ENCODE measurements at regions of chrX and their contacts with region 1.

Region 1: GRCh38 chrX:109709129-109709631 is 23.9 kb downstream of the ACSL4 start:
- DNase-seq: peak; percentile 60
- ATAC-seq: peak; percentile 82
- H3K4me3 ChIP-seq: 0 out of 2 replicates have a peak overlapping the region, but pooled peaks have one; percentile 29
- H3K27ac ChIP-seq: peak overlapping the region; percentile 71
- H3K4me1 ChIP-seq: peaks cover 9% of the 10 kb centered on the region
- H3K27me3 ChIP-seq: no peaks in the 10 kb centered on the region
- CTCF ChIP-seq: no peak; a peak in 1 of 6 replicates
- EP300 ChIP-seq: peak in 1 of 2 experiments; percentile 59; a peak in 2 of 4 replicates
- POLR2A ChIP-seq: no peak
- RAD21 ChIP-seq: no peak

Region 2: DNA sequence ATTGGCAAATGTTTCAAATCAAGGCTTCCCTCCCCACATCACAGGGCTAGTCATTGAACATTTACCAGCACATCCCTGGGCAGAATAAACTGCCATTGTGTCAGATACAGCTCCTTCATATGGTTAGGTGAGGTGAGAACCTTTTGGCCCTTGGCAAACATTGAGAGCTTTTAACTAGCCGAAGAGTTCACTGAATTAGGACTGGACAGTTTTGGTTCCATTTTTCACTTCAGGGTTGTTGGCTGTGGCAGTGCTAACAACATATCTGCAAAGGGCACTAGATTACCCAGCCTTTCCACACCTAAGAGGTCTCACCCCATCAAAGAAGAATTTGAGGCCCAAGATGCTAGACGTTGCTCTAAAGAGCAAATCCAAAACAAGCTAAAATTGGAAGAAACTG is 408.0 kb before region 1 on chrX:
- CTCF ChIA-PET with region 1: no interaction called
- POLR2A ChIA-PET with region 1: no interaction called
- RAD21 ChIA-PET with region 1: no interaction called
- SMC1A ChIA-PET with region 1: no interaction called
- in situ Hi-C with region 1: no loop called
- intact Hi-C with region 1: no loop called
- DNase-seq: no peak
- ATAC-seq: peak; percentile 31; the same call in 1 of the 3 replicates
- H3K4me3 ChIP-seq: no peak overlapping the region
- H3K27ac ChIP-seq: no peak overlapping the region
- H3K4me1 ChIP-seq: no peaks in the 10 kb centered on the region
- H3K27me3 ChIP-seq: no peaks in the 10 kb centered on the region
- CTCF ChIP-seq: no peak
- EP300 ChIP-seq: no peak
- POLR2A ChIP-seq: no peak
- RAD21 ChIP-seq: no peak

Region 3: DNA sequence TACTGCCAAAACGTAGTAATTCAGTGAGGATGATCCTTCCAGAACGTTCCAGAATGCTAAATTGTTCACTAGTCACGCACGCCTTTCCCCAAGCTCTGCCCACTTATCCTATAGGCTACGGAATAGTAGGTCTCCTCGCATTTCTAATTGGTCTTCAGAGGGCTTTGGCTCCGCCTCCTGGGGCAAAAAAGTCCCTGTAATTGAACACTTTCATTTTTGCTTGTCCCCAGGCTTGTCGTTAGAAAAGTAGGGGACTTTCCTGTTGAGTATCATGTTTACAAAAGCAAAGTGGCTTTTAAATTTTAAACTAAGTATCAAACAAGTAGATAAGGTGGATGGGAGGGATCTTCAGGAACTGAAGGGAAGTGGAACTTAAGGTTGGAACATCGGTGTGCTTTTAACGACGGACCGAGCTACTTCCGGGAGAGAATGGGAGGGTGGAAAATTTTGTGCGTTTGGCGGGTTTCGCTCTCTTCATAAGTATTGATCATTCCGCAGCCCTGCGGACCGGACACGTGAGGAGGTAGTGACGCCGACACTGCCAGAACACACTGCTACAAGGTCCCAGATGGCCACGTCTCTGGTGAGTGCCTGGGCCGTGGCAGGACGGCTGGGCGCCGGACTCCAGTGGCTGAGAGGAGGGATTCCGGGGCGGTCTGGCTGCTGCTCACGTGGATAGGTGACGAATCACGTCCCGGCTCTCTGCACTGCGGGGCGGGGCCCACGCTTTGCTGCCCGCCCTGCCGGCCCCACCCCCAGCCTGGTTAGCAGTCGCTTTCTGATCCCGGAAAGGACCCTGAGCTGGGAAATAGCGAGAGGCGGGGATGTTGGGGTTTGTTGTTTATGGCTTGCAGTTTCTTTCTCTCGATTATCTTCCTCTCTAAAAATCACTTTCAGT is 172.5 kb before region 1 on chrX and contains the start of gene NXT2:
- CTCF ChIA-PET with region 1: no interaction called
- POLR2A ChIA-PET with region 1: interaction called, 3 read pairs
- RAD21 ChIA-PET with region 1: interaction called, 4 read pairs
- SMC1A ChIA-PET with region 1: no interaction called
- in situ Hi-C with region 1: no loop called
- intact Hi-C with region 1: loop called (anchors 10 kb)
- DNase-seq: peak; percentile 73
- ATAC-seq: peak; percentile 99
- H3K4me3 ChIP-seq: peak within 1 kb of the TSS; percentile 64
- H3K27ac ChIP-seq: peak within 1 kb of the TSS; percentile 89
- H3K4me1 ChIP-seq: no peaks in the 10 kb centered on the region
- H3K27me3 ChIP-seq: no peaks in the 10 kb centered on the region
- CTCF ChIP-seq: no peak
- EP300 ChIP-seq: no peak; a peak in 1 of 4 replicates
- POLR2A ChIP-seq: peak; percentile 94
- RAD21 ChIP-seq: no peak
- polyA plus RNA-seq, gene NXT2: 17.4 to 30.0 TPM

Region 4: DNA sequence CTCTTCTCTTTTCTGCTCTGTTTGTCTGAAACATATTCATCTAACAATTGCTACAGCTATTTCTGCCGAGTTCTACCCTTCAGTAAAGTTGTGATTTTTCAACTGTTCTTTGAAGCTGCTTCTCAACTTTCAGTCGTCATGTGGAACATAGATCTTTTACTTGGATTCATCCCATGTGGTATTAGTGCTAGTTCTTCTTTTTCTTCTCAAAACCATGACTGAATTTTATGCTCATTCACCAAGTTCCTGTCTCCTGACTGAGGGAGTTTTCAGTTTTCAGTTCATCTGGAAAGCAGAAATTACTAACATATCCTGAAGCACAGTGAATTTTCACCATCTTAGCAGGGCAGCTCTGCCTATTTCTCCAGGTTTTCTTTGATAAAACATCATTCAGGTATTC is 11.8 kb after region 1 on chrX:
- CTCF ChIA-PET with region 1: interaction called, 21 read pairs
- POLR2A ChIA-PET with region 1: interaction called, 5 read pairs
- RAD21 ChIA-PET with region 1: interaction called, 19 read pairs
- SMC1A ChIA-PET with region 1: interaction called, 13 read pairs
- in situ Hi-C with region 1: no loop called
- intact Hi-C with region 1: no loop called
- DNase-seq: no peak
- ATAC-seq: peak; percentile 31
- H3K4me3 ChIP-seq: no peak overlapping the region
- H3K27ac ChIP-seq: no peak overlapping the region; the same call in 1 of the 2 replicates
- H3K4me1 ChIP-seq: peaks cover 10% of the 10 kb centered on the region
- H3K27me3 ChIP-seq: no peaks in the 10 kb centered on the region
- CTCF ChIP-seq: no peak
- EP300 ChIP-seq: no peak
- POLR2A ChIP-seq: no peak
- RAD21 ChIP-seq: no peak

Region 5: GRCh38 chrX:109830704-109831206 is 121.6 kb after region 1 on chrX:
- CTCF ChIA-PET with region 1: interaction called, 3 read pairs
- POLR2A ChIA-PET with region 1: no interaction called
- RAD21 ChIA-PET with region 1: interaction called, 20 read pairs
- SMC1A ChIA-PET with region 1: interaction called, 12 read pairs
- in situ Hi-C with region 1: no loop called
- intact Hi-C with region 1: no loop called
- DNase-seq: no peak
- ATAC-seq: peak; percentile 80
- H3K4me3 ChIP-seq: no peak overlapping the region
- H3K27ac ChIP-seq: no peak overlapping the region
- H3K4me1 ChIP-seq: no peaks in the 10 kb centered on the region
- H3K27me3 ChIP-seq: no peaks in the 10 kb centered on the region
- CTCF ChIP-seq: no peak
- EP300 ChIP-seq: no peak
- POLR2A ChIP-seq: no peak
- RAD21 ChIP-seq: no peak

Region 6: DNA sequence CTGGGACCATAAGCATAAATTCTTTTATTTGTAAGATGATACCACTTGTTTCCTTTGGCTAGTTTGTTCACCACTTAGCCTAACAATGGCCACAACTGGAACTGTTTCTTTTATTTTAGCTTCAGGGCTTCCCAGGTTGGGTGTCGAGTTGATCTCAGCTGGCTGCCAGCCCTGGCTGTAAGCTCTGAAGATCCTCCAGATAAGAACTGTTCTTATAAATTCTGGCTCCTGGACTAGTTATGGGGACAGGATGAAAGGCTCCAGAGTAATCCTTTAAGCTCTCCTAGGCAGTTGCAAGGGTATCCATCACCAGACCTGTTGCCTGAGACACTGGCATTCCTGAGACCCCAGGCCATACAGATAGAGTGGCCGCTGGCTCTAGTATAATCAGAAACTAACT is 153.3 kb after region 1 on chrX:
- CTCF ChIA-PET with region 1: interaction called, 337 read pairs
- POLR2A ChIA-PET with region 1: interaction called, 4 read pairs
- RAD21 ChIA-PET with region 1: interaction called, 257 read pairs
- SMC1A ChIA-PET with region 1: interaction called, 403 read pairs
- in situ Hi-C with region 1: no loop called
- intact Hi-C with region 1: loop called (anchors 1 kb)
- DNase-seq: no peak
- ATAC-seq: no peak
- H3K4me3 ChIP-seq: no peak overlapping the region
- H3K27ac ChIP-seq: no peak overlapping the region
- H3K4me1 ChIP-seq: no peaks in the 10 kb centered on the region
- H3K27me3 ChIP-seq: no peaks in the 10 kb centered on the region
- CTCF ChIP-seq: no peak
- EP300 ChIP-seq: no peak
- POLR2A ChIP-seq: no peak
- RAD21 ChIP-seq: no peak

Measured in GM12878 (cell line).